Activated CD8-positive, alpha-beta memory T cell treated with anti-CD3 and anti-CD28 coated beads, Interleukin-2, amount 10 ng/mL, durations not matched to agents 7 days and 5 days (primary cell): ENCODE measurements at regions of chr6 and their contacts with region 1.

Region 1: GRCh38 chr6:13574149-13574570 is 241 bp upstream of the SIRT5 start:
- DNase-seq: peak; percentile 95
- ATAC-seq: peak; percentile 80
- H3K4me3 Mint-ChIP-seq: peak overlapping the region; percentile 89
- H3K27ac Mint-ChIP-seq: peak overlapping the region; percentile 99
- H3K4me1 Mint-ChIP-seq: peaks cover 24% of the 10 kb centered on the region
- H3K27me3 Mint-ChIP-seq: no peaks in the 10 kb centered on the region

Region 2: DNA sequence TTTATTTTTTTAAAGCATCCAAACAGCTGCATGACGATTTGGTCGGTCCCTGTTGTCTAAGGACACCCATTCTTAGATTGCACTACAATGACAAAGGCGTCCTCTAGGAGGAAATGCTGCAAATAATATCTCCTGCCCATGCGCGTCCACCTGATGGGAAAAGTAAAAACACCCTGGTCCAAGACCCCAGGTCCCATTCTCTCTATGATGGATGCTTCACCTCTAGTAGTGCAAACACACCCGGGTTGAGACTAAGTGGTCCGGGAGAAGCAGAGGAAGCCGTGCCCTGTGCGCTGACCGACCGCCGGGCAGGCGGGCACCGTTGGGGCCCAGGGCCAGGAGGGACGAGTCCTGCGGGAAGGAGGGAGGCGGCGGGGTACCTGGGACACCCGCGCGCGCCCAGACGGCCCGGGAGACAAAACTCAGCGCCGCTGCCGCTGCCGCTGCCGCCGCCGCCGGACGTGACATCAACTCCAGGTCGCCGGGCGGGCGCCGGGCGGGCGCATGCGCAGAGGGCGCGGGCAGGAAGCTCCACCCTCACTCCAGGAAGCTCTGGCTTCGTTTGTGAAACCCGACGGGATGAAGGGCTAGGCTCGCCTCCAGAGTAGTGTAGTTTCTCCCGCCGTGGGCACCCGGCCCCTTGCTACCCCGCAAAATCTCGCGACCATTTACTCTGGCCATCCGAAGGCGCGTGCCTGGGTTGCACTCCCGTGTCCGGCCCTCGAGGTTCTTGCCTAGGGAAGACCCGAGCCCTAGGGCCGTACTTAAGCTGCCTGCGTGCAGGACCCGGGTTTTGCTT is 245.9 kb before region 1 on chr6 and contains the start of gene TBC1D7:
- CTCF ChIA-PET with region 1: interaction called, 49 read pairs
- DNase-seq: peak; percentile 95
- ATAC-seq: peak; percentile 96
- H3K4me3 Mint-ChIP-seq: peak within 1 kb of the TSS; percentile 87
- H3K27ac Mint-ChIP-seq: peak within 1 kb of the TSS; percentile 91
- H3K4me1 Mint-ChIP-seq: peaks cover 25% of the 10 kb centered on the region
- H3K27me3 Mint-ChIP-seq: no peaks in the 10 kb centered on the region
- total RNA-seq, gene TBC1D7: 25.1 to 26.0 TPM

Region 3: DNA sequence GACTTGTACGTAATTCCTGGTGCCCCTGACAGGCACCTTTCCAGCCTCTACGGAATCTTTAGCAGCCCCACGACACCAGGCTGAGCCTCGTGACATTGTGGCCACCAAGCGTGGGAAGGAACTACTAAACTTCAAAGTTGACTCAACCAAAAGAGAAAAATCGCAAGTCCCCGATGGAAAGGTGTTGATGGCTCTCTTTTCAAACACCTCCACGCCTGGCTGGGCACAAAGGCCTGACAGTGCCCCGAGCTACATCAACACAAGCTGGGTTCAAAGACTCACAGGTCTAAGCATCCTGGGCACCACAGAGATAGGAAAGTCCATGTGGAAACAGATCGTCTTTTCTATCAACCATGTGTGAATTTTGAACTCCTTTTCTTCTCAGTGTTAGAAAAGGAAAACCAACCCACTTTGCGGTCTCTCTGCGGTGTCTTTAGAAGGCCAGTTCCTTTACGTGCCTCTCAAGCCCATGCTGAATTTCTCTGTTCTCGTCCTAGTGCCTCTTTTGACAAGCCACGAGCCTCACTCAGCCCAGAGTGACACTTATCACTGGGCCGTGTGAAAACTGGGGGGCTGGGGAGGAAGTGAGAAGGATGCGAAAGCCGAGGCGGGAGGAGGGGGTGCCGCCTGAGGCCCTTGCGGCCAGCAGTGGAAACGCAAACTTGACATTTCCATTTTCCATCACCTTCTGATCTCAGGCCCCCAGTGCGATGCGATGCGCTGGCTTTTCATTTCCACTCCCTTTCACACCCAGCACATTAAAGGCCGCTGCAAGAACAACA is 146.2 kb before region 1 on chr6:
- CTCF ChIA-PET with region 1: interaction called, 17 read pairs
- DNase-seq: peak; percentile 89
- ATAC-seq: peak; percentile 72
- H3K4me3 Mint-ChIP-seq: peak overlapping the region; percentile 61
- H3K27ac Mint-ChIP-seq: peak overlapping the region; percentile 92
- H3K4me1 Mint-ChIP-seq: peaks cover 72% of the 10 kb centered on the region
- H3K27me3 Mint-ChIP-seq: no peaks in the 10 kb centered on the region

Region 4: GRCh38 chr6:13538084-13538483 is 36.1 kb before region 1 on chr6:
- CTCF ChIA-PET with region 1: interaction called, 10 read pairs
- DNase-seq: no peak
- ATAC-seq: no peak
- H3K4me3 Mint-ChIP-seq: no peak overlapping the region
- H3K27ac Mint-ChIP-seq: no peak overlapping the region
- H3K4me1 Mint-ChIP-seq: no peaks in the 10 kb centered on the region
- H3K27me3 Mint-ChIP-seq: peaks cover 3% of the 10 kb centered on the region

Region 5: DNA sequence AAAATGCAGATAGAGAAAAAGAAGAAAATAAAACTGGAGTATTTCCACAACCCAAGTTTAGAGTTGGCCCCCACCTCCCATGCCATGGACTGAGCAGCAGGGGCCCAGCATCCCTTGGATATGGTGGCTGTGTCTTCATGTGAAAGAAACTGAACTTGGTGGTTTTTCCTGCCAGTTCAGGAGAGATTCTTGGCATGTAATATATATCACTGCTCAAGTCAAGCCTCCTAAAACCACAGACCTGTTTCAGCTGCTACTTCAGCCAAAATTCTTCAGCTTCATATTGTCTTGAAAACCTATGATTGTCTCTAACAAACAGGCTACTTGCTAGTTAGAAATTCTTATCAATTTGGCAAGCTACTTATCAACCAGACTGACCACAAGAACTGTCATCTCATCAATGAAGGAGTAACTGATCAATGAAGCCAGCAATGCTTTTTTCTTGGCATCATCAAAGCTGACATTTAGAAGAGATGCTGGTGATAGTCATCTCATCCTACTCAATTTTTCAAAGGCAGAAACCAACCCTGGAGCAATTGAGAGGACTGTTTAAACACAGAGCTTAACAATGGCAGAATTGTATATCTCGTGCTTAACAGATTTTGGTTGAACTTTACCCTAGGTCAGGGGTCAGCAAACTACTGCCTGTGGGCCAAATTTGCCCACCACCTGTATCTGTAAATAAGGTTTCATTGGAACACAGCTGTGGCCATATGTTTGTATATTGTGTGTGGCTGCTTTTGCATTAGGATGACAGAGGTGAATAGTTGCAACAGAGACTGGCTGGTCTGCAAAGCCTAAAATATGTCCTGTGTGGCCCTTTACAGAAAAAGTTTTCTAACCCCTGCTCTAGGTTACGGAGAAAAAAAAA is 30.6 kb after region 1 on chr6:
- CTCF ChIA-PET with region 1: interaction called, 11 read pairs
- DNase-seq: no peak
- ATAC-seq: no peak
- H3K4me3 Mint-ChIP-seq: no peak overlapping the region
- H3K27ac Mint-ChIP-seq: no peak overlapping the region
- H3K4me1 Mint-ChIP-seq: peaks cover 4% of the 10 kb centered on the region
- H3K27me3 Mint-ChIP-seq: no peaks in the 10 kb centered on the region

Region 6: DNA sequence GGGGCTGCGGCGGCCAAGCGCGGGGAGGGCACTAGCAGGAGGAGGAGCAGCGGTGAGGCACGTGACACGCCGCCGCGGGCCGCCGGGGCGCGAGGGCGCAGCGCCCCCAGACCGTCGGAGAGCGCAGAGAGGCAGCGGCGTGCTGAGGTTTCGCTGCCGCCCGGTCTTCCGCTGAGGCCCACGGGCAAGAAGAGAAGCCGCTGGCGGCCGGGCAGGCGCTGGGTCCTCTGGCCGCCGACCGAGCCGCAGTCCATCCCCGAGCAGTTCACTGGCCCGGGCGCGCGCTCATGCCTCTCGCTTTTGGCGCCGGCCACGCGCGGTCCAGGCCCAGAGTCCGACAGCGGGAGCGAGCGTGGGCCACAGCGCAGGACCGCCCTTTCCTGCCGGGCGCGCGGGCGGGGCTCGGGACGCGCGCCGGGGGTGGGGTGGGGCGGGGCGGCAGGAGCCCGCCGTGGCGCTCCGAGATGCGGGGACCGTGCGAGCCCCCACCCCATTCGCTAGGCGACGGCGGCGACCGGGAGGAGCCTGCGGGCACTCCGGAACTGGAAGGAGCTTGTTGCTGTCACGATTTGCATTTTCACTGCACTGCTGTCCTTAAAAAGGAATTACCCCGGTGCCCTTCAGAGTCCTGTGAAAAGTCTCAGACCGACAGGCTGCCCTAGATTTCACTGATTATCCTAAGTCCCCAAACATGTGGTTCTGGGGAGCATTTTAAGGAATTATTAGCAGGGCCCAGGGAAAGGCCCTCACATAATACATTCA is 240.2 kb after region 1 on chr6 and contains the start of gene MCUR1:
- CTCF ChIA-PET with region 1: interaction called, 10 read pairs
- DNase-seq: peak; percentile 89
- ATAC-seq: peak; percentile 87
- H3K4me3 Mint-ChIP-seq: peak within 1 kb of the TSS; percentile 86
- H3K27ac Mint-ChIP-seq: peak within 1 kb of the TSS; percentile 82
- H3K4me1 Mint-ChIP-seq: peaks cover 24% of the 10 kb centered on the region
- H3K27me3 Mint-ChIP-seq: peaks cover 4% of the 10 kb centered on the region
- total RNA-seq, gene MCUR1: 27.7 to 31.1 TPM